Prostate gland (tissue), 2 donors: ENCODE measurements at regions of chr6 and their contacts with region 1.

Region 1: DNA sequence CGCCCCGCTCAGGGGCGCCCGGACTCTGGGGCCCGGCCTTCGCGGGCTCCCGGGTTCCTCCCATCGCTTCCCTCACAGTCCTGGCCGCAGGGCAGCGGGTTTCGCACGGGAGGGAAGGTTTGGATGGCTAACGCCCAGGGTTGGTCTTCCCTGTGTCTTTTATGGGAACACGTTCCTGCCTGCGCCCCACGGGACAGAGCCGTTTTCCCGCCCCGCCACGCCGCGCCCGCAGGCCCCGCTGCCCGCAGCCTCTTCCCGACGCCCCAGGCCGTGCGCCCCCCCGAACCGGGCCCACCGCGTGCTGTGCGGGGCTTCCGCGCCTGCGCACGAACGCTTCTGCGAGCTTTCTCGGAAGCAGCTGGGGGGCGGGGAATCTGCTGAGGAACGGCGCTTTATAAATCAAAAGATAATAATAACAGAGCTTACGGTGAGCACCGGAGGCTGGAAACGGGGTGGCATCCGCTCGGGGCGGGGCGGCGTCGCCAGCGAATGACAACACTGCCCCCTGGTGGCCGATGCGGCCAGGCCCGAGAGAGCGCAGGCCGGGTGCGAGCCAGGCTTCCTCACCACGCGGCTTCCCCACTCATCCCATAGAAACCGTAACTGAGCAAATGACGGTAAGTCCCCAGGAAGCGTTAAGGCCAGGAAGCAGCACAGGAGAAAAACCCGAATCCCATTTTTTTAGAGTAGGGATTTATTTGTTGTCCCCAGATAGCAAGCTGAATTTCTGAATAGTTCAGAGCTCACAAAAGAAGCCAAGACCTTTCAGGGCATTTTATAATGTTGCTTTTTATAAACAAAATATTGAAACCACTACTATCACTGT is 116.4 kb downstream of the MYLK4 start:
- DNase-seq: peak; percentile 70
- H3K4me3 ChIP-seq: peak overlapping the region; percentile 35 to 38
- H3K27ac ChIP-seq: peak overlapping the region; percentile 66 to 68
- H3K4me1 ChIP-seq: no peaks in the 10 kb centered on the region
- H3K27me3 ChIP-seq: no peaks in the 10 kb centered on the region
- CTCF ChIP-seq: peak; percentile 96 to 100 (median 96)
- POLR2A ChIP-seq: no peak

Region 2: DNA sequence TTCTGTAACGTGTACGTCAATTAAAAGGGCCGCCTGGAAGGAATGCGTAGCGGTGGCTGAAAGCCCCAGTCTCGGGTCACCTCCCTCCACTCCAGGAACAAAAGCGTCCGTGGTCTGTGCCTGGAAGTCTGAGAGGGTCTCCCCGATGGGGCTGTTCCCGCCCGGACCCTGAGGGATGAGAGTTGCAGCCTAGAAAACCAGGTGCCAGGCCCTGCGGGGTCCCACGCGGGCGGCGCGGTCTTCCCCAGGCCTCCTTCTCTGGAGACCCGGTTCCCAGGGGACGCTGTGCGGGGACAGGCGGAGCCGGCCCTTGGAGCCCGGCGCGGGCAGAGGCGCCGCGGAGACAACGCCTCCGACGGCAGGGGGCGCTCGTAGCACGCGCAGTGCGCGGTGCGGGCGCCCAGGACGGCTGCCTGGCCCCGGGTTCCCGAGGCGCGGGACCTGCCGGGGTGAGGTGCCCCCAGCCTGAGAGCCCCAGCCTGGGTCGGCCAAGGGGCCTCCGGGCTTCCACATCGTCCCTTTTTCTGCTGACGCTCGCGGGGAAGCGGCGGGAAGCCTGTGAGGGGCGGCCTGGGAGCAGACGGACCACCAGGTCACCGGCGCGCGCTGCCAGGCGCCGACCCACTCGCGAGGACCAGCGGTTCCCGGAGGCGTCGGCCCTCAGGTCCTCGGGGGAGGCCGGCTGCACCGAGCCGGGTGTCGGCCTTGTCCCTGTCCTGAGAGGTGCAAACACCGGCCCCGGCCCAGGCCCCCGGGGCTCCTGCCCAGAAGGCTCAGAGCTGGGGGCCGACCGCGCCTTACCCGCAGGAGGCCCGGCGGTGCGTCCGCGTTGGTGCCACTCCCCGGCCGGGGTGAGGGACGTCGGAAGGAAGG is 1030.0 kb before region 1 on chr6:
- intact Hi-C with region 1: loop called (anchors 2 kb)
- DNase-seq: peak; percentile 58
- H3K4me3 ChIP-seq: peak overlapping the region; percentile 24 to 26
- H3K27ac ChIP-seq: peak overlapping the region in 1 of 2 donors; percentile 20
- H3K4me1 ChIP-seq: peaks cover 3% of the 10 kb centered on the region
- H3K27me3 ChIP-seq: peaks cover 2% of the 10 kb centered on the region
- CTCF ChIP-seq: peak; percentile 95 to 98 (median 96)
- POLR2A ChIP-seq: no peak

Region 3: DNA sequence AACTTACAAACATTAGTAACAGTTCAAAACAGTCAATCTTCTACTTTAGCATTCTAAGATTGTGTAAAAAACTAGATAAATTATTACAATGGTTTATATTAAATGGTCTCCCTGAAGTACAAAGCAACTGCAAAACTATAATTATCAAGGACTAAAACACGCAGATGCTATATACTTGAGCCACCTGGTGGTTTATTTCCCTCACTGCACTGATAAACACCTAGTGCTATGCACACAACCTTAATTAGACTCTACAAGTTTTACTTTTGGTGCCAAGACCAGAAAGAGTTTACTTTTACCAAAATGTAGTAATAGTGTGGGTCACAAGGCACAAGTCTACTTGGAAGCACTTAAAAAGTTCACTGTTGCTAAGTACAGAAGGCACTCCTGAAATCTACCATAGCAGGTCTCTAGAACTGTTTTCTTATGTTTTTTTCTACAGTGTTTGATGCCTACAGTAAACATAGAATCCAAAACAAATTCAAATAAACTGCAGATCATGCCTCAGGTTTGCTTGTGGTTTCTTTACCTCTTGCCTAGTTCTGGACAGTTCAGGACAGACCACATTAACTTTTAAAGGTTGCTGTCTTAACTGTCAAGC is 438.2 kb before region 1 on chr6:
- intact Hi-C with region 1: loop called (anchors 5 kb)
- DNase-seq: peak; percentile 32
- H3K4me3 ChIP-seq: no peak overlapping the region
- H3K27ac ChIP-seq: no peak overlapping the region
- H3K4me1 ChIP-seq: no peaks in the 10 kb centered on the region
- H3K27me3 ChIP-seq: no peaks in the 10 kb centered on the region
- CTCF ChIP-seq: peak; percentile 52 to 86 (median 75)
- POLR2A ChIP-seq: no peak

Region 4: GRCh38 chr6:2274981-2275891 is 359.1 kb before region 1 on chr6:
- intact Hi-C with region 1: no loop called
- DNase-seq: no peak
- H3K4me3 ChIP-seq: no peak overlapping the region
- H3K27ac ChIP-seq: no peak overlapping the region
- H3K4me1 ChIP-seq: no peaks in the 10 kb centered on the region
- H3K27me3 ChIP-seq: no peaks in the 10 kb centered on the region
- CTCF ChIP-seq: no peak
- POLR2A ChIP-seq: no peak

Region 5: GRCh38 chr6:2353412-2354137 is 280.8 kb before region 1 on chr6:
- intact Hi-C with region 1: loop called (anchors 10 kb)
- DNase-seq: peak; percentile 62
- H3K4me3 ChIP-seq: no peak overlapping the region
- H3K27ac ChIP-seq: no peak overlapping the region
- H3K4me1 ChIP-seq: no peaks in the 10 kb centered on the region
- H3K27me3 ChIP-seq: no peaks in the 10 kb centered on the region
- CTCF ChIP-seq: peak in 3 of 4 experiments; percentile 77 to 81 (median 80)
- POLR2A ChIP-seq: no peak

Region 6: GRCh38 chr6:2448820-2449571 is 185.4 kb before region 1 on chr6:
- intact Hi-C with region 1: loop called (anchors 10 kb)
- DNase-seq: peak; percentile 29
- H3K4me3 ChIP-seq: no peak overlapping the region
- H3K27ac ChIP-seq: no peak overlapping the region
- H3K4me1 ChIP-seq: no peaks in the 10 kb centered on the region
- H3K27me3 ChIP-seq: no peaks in the 10 kb centered on the region
- CTCF ChIP-seq: peak; percentile 14 to 59 (median 43)
- POLR2A ChIP-seq: no peak